WTC11 (cell line): ENCODE measurements at regions of chr11 and their contacts with region 1.

Region 1: DNA sequence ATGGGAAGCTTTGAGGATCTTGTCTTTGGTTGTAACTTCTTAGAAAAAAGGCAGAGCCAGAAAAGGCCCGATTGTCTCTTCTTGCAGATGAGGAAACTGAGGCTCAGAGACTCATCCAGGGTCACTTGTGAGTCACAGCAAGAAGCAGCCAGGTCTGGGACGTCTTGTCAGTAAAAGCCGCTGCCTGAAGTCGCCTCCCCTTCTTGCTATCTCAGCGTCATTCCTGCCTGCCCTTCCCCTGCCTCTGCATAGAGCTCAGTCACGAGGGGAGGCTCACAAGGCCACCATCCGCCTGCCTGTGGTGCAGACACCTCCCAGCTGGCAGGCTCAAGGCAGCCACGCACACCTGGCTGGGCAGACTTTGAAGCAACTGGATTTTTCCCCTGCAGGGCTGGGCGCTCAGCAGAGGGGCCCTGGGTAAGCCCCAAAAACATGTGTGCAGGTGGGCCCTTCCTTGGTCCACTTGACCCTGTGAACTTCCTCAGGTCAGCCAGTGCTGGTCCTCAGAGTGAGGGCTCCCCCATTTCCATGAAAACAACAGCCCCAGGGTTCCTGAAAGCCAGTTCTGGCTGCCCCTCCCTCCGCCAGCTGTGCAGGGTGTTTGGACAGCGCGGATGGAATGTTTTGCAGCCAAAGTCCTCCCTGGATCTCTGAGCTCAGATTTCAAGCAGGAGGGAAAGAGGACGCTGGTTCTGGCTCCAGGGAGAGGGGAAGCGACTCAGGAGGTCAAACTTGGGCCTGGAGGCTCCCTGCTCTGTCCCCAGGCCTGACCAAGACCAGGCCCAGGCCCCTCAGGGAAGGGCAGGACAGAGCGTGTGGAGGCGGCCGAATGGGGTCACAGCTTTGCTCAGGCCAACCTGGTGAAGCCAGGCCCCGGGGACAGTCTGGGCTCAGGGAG is 6.0 kb upstream of the RAB3IL1 start:
- DNase-seq: peak; percentile 69
- ATAC-seq: peak; percentile 67
- H3K4me3 Mint-ChIP-seq: peak overlapping the region; percentile 41
- H3K27ac Mint-ChIP-seq: peak overlapping the region; percentile 94
- H3K4me1 Mint-ChIP-seq: peaks cover 42% of the 10 kb centered on the region
- H3K27me3 Mint-ChIP-seq: peaks cover 11% of the 10 kb centered on the region
- CTCF ChIP-seq: no peak

Region 2: DNA sequence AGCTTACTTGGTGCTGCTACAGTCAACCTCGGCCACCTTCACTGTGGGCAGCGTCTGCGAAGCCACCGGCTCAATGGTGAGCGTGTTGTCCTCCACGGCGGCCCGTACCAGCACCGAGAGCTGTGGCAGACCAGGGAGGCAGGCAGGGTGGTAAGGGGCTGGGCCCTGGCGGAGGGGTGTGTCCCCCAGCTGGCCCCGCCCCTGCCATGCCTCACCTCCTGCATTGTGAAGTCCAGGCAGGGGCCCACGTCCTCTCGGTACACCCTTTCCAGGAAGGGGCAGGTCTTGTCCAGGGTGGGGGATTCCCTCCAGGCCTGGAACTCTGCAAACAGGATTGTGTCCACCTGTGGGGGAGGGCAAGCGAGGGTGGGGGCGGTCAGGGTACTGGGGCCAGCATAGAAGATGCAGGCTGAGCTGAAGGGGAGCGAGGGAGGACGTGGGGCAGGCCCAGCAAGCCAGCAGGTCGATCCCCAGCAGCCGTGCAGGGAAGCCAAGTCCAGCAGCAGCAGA is 18.8 kb before region 1 on chr11:
- CTCF ChIA-PET with region 1: interaction called, 95 read pairs
- POLR2A ChIA-PET with region 1: interaction called, 9 read pairs
- DNase-seq: peak; percentile 72
- ATAC-seq: peak; percentile 84
- H3K4me3 Mint-ChIP-seq: no peak overlapping the region
- H3K27ac Mint-ChIP-seq: no peak overlapping the region
- H3K4me1 Mint-ChIP-seq: peaks cover 29% of the 10 kb centered on the region
- H3K27me3 Mint-ChIP-seq: no peaks in the 10 kb centered on the region
- CTCF ChIP-seq: no peak

Region 3: GRCh38 chr11:61912530-61912898 is 10.9 kb before region 1 on chr11:
- CTCF ChIA-PET with region 1: interaction called, 17 read pairs
- POLR2A ChIA-PET with region 1: interaction called, 9 read pairs
- DNase-seq: peak; percentile 2
- ATAC-seq: no peak
- H3K4me3 Mint-ChIP-seq: no peak overlapping the region
- H3K27ac Mint-ChIP-seq: no peak overlapping the region; the same call in 1 of the 2 replicates
- H3K4me1 Mint-ChIP-seq: peaks cover 19% of the 10 kb centered on the region
- H3K27me3 Mint-ChIP-seq: peaks cover 17% of the 10 kb centered on the region
- CTCF ChIP-seq: no peak

Region 4: DNA sequence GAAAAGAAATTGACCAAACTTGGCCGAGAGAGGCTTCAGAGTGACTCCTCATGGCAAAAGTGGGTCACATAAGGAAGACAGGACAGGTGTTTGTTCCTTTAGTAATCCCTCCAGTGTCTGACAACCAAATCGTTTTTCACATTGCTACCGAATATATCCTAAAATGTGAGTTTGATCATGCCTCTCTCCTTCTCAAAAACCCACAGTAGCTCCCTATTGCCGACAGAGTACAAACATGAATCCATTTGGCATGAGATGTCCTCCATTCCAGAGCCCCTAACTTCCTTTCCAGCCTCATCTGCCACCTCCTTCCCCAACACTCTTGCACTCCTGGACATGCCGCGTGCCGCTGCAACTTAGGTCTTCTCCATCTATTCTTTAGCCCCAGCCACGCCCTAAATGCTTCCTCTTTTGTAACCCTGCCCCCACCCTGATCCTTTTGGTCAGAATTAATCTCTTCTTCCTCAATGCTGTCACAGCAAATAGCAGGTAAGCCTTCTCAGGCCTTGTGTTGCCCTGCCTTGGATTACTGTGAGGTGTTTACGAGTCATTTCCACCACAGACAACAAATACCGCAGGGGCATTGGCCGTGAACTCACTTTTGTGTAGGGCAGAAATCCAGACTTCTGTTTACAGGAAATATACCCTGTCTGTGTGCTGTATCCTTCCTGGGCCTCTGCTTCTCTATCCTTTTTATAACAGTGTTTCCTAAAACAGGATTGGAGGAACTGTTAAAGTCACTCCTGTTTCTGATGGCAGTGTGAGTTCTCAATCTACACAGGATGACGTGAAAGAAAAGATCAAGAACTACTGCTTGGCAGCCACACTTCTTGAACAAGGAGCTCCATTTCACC is 110.0 kb after region 1 on chr11:
- CTCF ChIA-PET with region 1: no interaction called
- POLR2A ChIA-PET with region 1: no interaction called
- DNase-seq: no peak
- ATAC-seq: no peak
- H3K4me3 Mint-ChIP-seq: no peak overlapping the region
- H3K27ac Mint-ChIP-seq: no peak overlapping the region
- H3K4me1 Mint-ChIP-seq: peaks cover 26% of the 10 kb centered on the region
- H3K27me3 Mint-ChIP-seq: peaks cover 6% of the 10 kb centered on the region; the same call in 1 of the 2 replicates
- CTCF ChIP-seq: no peak